K562 (cell line): ENCODE measurements at regions of chr1 and their contacts with region 1.

Region 1: DNA sequence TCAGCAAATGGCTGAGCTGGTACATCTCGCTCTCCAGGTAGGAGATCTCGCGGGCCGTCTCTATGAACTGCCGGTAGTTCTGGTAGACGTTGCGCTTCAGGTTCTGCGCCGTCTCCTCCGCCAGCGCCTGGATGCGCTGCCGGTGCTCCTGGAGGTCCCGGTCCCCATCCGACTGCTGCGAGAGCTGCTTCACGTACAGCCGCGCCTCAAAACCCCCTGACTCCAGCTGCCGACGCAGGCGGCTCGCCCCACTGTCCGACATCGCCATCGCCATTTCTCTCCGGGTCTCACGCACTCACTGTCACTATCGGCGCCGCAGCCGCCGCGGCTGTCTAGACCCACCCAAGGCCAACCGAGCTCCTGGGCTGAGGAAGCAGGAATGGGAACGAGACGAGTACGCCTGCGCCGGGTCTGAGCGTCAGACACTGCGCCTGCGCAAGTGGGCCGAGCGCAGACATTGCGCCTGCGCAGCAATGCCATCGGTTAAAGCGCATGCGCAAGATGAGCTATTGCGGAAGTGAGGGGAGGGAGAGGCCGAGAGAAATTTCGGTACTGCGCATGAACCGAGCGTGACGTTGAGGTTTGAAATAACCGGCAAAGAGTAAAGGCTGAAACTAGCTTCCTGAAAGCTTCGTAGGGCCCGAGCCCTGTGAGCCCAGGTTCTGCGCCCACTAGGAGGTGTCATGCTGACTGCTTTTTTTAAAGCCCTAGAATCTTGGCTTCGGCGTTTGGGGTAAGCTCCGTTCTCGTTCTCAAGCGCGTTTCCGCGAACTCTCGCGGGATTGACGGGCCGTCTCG is at the start of gene EXOC8:
- DNase-seq: peak; percentile 98 to 99 (median 99)
- ATAC-seq: peak; percentile 85
- H3K4me3 ChIP-seq: peak within 1 kb of the TSS; percentile 77
- H3K27ac ChIP-seq: peak within 1 kb of the TSS; percentile 91
- H3K4me1 ChIP-seq: peaks cover 21 to 32% of the 10 kb centered on the region in 2 experiments; a peak in 4 of 5 replicates
- H3K27me3 ChIP-seq: no peaks in the 10 kb centered on the region
- CTCF ChIP-seq: peak in 2 of 3 experiments; percentile 5 to 19; a peak in 3 of 6 replicates
- EP300 ChIP-seq: no peak
- POLR2A ChIP-seq: peak; percentile 90
- RAD21 ChIP-seq: no peak
- polyA plus RNA-seq, gene EXOC8: 2.1 to 4.2 TPM

Region 2: GRCh38 chr1:230986976-230987375 is 350.7 kb before region 1 on chr1:
- CTCF ChIA-PET with region 1: no interaction called
- POLR2A ChIA-PET with region 1: no interaction called
- in situ Hi-C with region 1: no loop called
- intact Hi-C with region 1: loop called (anchors 10 kb)
- DNase-seq: peak in 1 of 4 experiments; percentile 37
- ATAC-seq: no peak
- H3K4me3 ChIP-seq: no peak overlapping the region
- H3K27ac ChIP-seq: no peak overlapping the region
- H3K4me1 ChIP-seq: peaks cover 9 to 41% of the 10 kb centered on the region in 2 experiments
- H3K27me3 ChIP-seq: no peaks in the 10 kb centered on the region
- CTCF ChIP-seq: no peak
- EP300 ChIP-seq: no peak
- POLR2A ChIP-seq: no peak
- RAD21 ChIP-seq: no peak

Region 3: GRCh38 chr1:231187571-231187970 is 150.1 kb before region 1 on chr1:
- CTCF ChIA-PET with region 1: no interaction called
- POLR2A ChIA-PET with region 1: no interaction called
- in situ Hi-C with region 1: no loop called
- intact Hi-C with region 1: no loop called
- DNase-seq: no peak
- ATAC-seq: no peak
- H3K4me3 ChIP-seq: no peak overlapping the region
- H3K27ac ChIP-seq: no peak overlapping the region
- H3K4me1 ChIP-seq: no peaks in the 10 kb centered on the region; a peak in 3 of 5 replicates
- H3K27me3 ChIP-seq: peaks cover 57 to 87% of the 10 kb centered on the region in 2 experiments
- CTCF ChIP-seq: no peak
- EP300 ChIP-seq: no peak
- POLR2A ChIP-seq: no peak
- RAD21 ChIP-seq: no peak

Region 4: GRCh38 chr1:231240883-231241735 is 96.6 kb before region 1 on chr1 and contains the start of gene GNPAT:
- CTCF ChIA-PET with region 1: no interaction called
- POLR2A ChIA-PET with region 1: interaction called, 4 read pairs
- in situ Hi-C with region 1: no loop called
- intact Hi-C with region 1: loop called (anchors 2 kb)
- DNase-seq: peak; percentile 95 to 99 (median 98)
- ATAC-seq: peak; percentile 98
- H3K4me3 ChIP-seq: peak within 1 kb of the TSS; percentile 62
- H3K27ac ChIP-seq: peak within 1 kb of the TSS; percentile 81
- H3K4me1 ChIP-seq: peaks cover 5 to 18% of the 10 kb centered on the region in 2 experiments; a peak in 3 of 5 replicates
- H3K27me3 ChIP-seq: no peaks in the 10 kb centered on the region
- CTCF ChIP-seq: peak in 1 of 3 experiments; percentile 20; a peak in 1 of 6 replicates
- EP300 ChIP-seq: no peak
- POLR2A ChIP-seq: peak; percentile 97
- RAD21 ChIP-seq: no peak
- polyA plus RNA-seq, gene GNPAT: 32.1 to 49.8 TPM

Region 5: GRCh38 chr1:231315887-231316286 is 21.8 kb before region 1 on chr1:
- CTCF ChIA-PET with region 1: no interaction called
- POLR2A ChIA-PET with region 1: interaction called, 17 read pairs
- in situ Hi-C with region 1: no loop called
- intact Hi-C with region 1: no loop called
- DNase-seq: peak; percentile 54 to 81 (median 62)
- ATAC-seq: peak; percentile 97
- H3K4me3 ChIP-seq: no peak overlapping the region
- H3K27ac ChIP-seq: no peak overlapping the region
- H3K4me1 ChIP-seq: no peaks in the 10 kb centered on the region
- H3K27me3 ChIP-seq: peaks cover 4 to 7% of the 10 kb centered on the region in 2 experiments; a peak in 3 of 5 replicates
- CTCF ChIP-seq: peak; percentile 86 to 90 (median 89)
- EP300 ChIP-seq: no peak
- POLR2A ChIP-seq: no peak
- RAD21 ChIP-seq: peak; percentile 66 to 85

Region 6: DNA sequence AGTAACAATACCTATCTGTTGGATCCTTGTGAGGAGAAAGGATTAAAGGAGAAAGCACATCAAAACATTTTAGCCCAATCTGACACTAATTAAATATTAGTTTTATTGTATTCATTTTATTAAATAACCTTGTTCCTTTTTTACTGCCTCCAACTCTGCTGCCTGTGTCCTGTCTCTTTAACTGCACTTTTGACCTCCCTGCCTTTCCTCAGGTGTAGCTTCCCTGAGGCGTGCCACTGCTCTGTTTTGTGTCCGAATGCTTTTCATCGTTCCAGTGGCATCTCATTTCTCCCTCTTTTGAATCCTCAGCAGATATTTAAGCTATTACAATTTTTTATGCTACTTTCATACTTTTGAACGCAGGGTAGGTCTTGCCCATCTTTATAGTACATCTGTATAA is 10.8 kb after region 1 on chr1:
- CTCF ChIA-PET with region 1: no interaction called
- POLR2A ChIA-PET with region 1: interaction called, 10 read pairs
- in situ Hi-C with region 1: no loop called
- intact Hi-C with region 1: no loop called
- DNase-seq: no peak
- ATAC-seq: no peak
- H3K4me3 ChIP-seq: no peak overlapping the region
- H3K27ac ChIP-seq: no peak overlapping the region
- H3K4me1 ChIP-seq: no peaks in the 10 kb centered on the region; a peak in 1 of 5 replicates
- H3K27me3 ChIP-seq: no peaks in the 10 kb centered on the region
- CTCF ChIP-seq: no peak
- EP300 ChIP-seq: no peak
- POLR2A ChIP-seq: no peak
- RAD21 ChIP-seq: no peak